PC-3 (cell line): ENCODE measurements at regions of chr14 and their contacts with region 1.

Region 1: DNA sequence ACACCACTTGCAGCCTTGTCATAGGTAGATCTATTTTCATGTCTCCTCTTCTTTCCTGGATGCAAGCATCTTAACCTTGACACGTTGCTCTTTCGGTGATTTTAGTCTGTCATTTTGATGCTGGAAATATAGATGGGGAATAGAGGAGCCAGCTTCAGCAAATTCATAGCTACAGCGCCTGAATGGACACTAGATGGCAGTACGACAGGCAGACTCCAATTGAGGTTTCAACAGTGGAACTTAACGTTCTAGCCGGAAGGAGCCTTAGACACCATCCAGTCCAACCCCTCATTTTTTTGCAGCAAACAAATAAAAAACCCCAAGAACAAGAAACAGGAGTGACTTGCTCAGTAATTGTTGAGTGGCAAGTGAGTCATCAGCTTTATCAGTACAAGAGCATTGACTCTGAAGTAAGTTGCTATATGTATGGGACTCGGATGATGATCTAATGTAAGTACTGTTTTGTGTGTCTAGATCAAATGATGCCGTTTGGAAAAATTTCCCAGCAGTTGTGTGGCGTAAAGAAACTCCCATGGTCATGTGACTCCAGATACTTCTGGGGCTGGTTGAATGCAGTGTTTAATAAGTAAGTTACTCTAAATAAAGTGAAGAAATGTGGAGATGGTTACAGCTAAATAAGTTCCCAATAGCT is 9.0 kb downstream of the DMAC2L start:
- DNase-seq: peak; percentile 97
- ATAC-seq: peak; percentile 96
- H3K4me3 ChIP-seq: peak overlapping the region; percentile 25; the same call in 1 of the 2 replicates
- H3K27ac ChIP-seq: peak overlapping the region; percentile 87
- H3K4me1 ChIP-seq: peaks cover 22% of the 10 kb centered on the region
- H3K27me3 ChIP-seq: no peaks in the 10 kb centered on the region
- CTCF ChIP-seq: peak; percentile 98

Region 2: GRCh38 chr14:50148799-50149198 is 172.3 kb before region 1 on chr14:
- CTCF ChIA-PET with region 1: no interaction called
- POLR2A ChIA-PET with region 1: no interaction called
- intact Hi-C with region 1: no loop called
- DNase-seq: no peak
- ATAC-seq: no peak
- H3K4me3 ChIP-seq: no peak overlapping the region
- H3K27ac ChIP-seq: no peak overlapping the region
- H3K4me1 ChIP-seq: no peaks in the 10 kb centered on the region
- H3K27me3 ChIP-seq: no peaks in the 10 kb centered on the region
- CTCF ChIP-seq: no peak

Region 3: GRCh38 chr14:50299585-50299984 is 21.6 kb before region 1 on chr14:
- CTCF ChIA-PET with region 1: interaction called, 16 read pairs
- POLR2A ChIA-PET with region 1: no interaction called
- intact Hi-C with region 1: no loop called
- DNase-seq: no peak
- ATAC-seq: no peak
- H3K4me3 ChIP-seq: no peak overlapping the region
- H3K27ac ChIP-seq: no peak overlapping the region
- H3K4me1 ChIP-seq: no peaks in the 10 kb centered on the region
- H3K27me3 ChIP-seq: no peaks in the 10 kb centered on the region
- CTCF ChIP-seq: no peak

Region 4: DNA sequence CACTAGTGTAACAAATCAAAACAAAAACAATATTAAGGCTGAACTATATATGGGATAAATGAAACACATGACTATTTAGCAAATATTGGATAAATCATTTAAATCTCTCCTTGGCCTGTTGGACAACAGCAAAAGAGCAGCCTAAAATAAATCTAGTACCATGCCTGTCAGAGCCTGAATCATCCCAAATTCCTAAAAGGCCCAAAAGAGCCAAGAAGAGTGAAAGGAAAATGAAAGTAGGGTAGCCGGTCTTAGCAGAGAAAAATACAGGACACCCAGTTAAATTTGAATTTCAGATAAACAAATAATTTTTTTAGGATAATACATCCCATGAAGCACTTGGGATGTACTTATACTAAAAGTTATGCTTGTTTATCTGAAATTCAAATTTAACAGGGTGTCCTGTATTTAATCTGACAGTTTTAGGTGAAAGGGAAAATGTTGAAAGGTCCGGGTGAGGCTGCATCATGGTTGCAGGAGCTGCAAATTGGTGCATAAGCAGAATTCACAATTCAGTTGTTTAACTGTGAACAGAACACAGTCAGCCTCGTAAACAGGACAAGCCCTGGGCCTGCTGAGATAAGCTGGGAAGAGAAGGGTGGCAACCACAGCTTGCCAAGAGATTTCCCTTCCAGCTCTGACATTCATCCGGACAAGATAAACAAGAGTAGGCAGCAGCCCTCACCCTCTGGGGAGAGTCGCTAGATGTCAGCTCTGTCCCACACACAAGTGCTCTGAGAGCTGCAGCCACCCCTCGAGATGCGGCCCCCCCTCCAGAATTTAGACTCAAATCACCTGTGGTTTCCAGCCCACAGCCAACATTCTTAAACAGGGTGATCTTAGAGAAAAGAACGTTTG is 21.3 kb after region 1 on chr14:
- CTCF ChIA-PET with region 1: interaction called, 14 read pairs
- POLR2A ChIA-PET with region 1: interaction called, 3 read pairs
- intact Hi-C with region 1: loop called (anchors 1 kb)
- DNase-seq: peak; percentile 86
- ATAC-seq: peak; percentile 95
- H3K4me3 ChIP-seq: peak overlapping the region; percentile 13; the same call in 1 of the 2 replicates
- H3K27ac ChIP-seq: no peak overlapping the region
- H3K4me1 ChIP-seq: peaks cover 22% of the 10 kb centered on the region
- H3K27me3 ChIP-seq: no peaks in the 10 kb centered on the region
- CTCF ChIP-seq: peak; percentile 72

Region 5: DNA sequence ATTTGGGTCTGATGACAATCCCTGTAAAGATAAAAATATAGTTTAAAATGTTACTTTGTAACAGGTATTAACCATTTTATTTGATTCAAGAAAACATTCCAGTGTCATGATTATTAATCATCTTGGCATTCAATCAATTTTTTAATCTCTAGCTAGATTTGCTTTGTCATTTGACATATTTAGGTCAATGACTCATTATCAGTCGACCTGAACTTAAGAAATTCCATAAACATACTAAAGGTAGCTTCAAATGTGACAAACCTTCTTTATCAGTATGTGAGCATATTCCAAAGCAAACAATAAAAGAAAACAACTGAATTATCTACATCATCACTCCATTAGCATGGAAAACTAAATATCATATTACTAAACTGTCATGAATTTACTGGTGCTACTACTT is 126.3 kb after region 1 on chr14:
- CTCF ChIA-PET with region 1: no interaction called
- POLR2A ChIA-PET with region 1: no interaction called
- intact Hi-C with region 1: loop called (anchors 1 kb)
- DNase-seq: peak; percentile 93
- ATAC-seq: peak; percentile 75
- H3K4me3 ChIP-seq: no peak overlapping the region
- H3K27ac ChIP-seq: peak overlapping the region; percentile 50
- H3K4me1 ChIP-seq: peaks cover 31% of the 10 kb centered on the region
- H3K27me3 ChIP-seq: no peaks in the 10 kb centered on the region
- CTCF ChIP-seq: no peak

Region 6: GRCh38 chr14:50736932-50737419 is 415.8 kb after region 1 on chr14:
- CTCF ChIA-PET with region 1: no interaction called
- POLR2A ChIA-PET with region 1: no interaction called
- intact Hi-C with region 1: no loop called
- DNase-seq: no peak
- ATAC-seq: no peak
- H3K4me3 ChIP-seq: no peak overlapping the region
- H3K27ac ChIP-seq: no peak overlapping the region
- H3K4me1 ChIP-seq: peaks cover 25% of the 10 kb centered on the region
- H3K27me3 ChIP-seq: no peaks in the 10 kb centered on the region
- CTCF ChIP-seq: no peak

Region 7: GRCh38 chr14:51157012-51157411 is 835.9 kb after region 1 on chr14:
- CTCF ChIA-PET with region 1: no interaction called
- POLR2A ChIA-PET with region 1: no interaction called
- intact Hi-C with region 1: no loop called
- DNase-seq: peak; percentile 75
- ATAC-seq: peak; percentile 98
- H3K4me3 ChIP-seq: no peak overlapping the region
- H3K27ac ChIP-seq: no peak overlapping the region
- H3K4me1 ChIP-seq: peaks cover 11% of the 10 kb centered on the region
- H3K27me3 ChIP-seq: no peaks in the 10 kb centered on the region
- CTCF ChIP-seq: peak; percentile 91

Region 8: GRCh38 chr14:52220924-52221811 is 1900.0 kb after region 1 on chr14:
- CTCF ChIA-PET with region 1: no interaction called
- POLR2A ChIA-PET with region 1: interaction called, 18 read pairs
- intact Hi-C with region 1: no loop called
- DNase-seq: no peak
- ATAC-seq: no peak
- H3K4me3 ChIP-seq: no peak overlapping the region
- H3K27ac ChIP-seq: no peak overlapping the region
- H3K4me1 ChIP-seq: no peaks in the 10 kb centered on the region
- H3K27me3 ChIP-seq: no peaks in the 10 kb centered on the region
- CTCF ChIP-seq: no peak